GM10248 (cell line): ENCODE measurements at regions of chr11 and their contacts with region 1.

Region 1: GRCh38 chr11:68297812-68298658 is 14.4 kb upstream of the LRP5 start:
- DNase-seq: peak; percentile 89
- CTCF ChIP-seq: peak; percentile 93

Region 2: GRCh38 chr11:68191661-68192579 is 106.1 kb before region 1 on chr11:
- CTCF ChIA-PET with region 1: no interaction called
- POLR2A ChIA-PET with region 1: no interaction called
- DNase-seq: no peak
- CTCF ChIP-seq: no peak

Region 3: DNA sequence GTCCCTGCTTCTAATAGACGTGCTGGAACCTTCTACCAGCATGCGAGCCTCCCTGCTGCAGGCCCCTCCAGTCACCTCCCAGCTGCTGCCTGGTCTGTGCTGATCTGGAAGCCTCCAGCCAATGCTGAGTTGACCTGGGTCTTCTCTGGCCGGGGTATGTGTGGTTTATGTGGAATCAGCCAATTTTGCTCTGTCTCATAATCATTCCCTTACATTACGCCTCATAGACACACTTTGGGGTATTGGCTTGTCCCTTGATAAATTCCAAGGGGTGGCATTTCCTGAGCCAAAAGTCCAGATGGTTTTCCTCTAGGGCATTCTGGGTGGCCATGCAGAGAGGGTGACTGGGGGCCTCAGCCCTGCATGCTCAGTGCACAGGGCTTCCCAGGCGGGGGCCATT is 76.6 kb before region 1 on chr11:
- CTCF ChIA-PET with region 1: interaction called, 11 read pairs
- POLR2A ChIA-PET with region 1: no interaction called
- DNase-seq: no peak
- CTCF ChIP-seq: no peak

Region 4: GRCh38 chr11:68257475-68258362 is 40.3 kb before region 1 on chr11:
- CTCF ChIA-PET with region 1: interaction called, 197 read pairs
- POLR2A ChIA-PET with region 1: interaction called, 3 read pairs
- DNase-seq: peak; percentile 87
- CTCF ChIP-seq: peak; percentile 72

Region 5: GRCh38 chr11:68271781-68272608 is 26.0 kb before region 1 on chr11 and contains the start of gene C11orf24:
- CTCF ChIA-PET with region 1: interaction called, 67 read pairs
- POLR2A ChIA-PET with region 1: interaction called, 3 read pairs
- DNase-seq: peak; percentile 98
- CTCF ChIP-seq: no peak

Region 6: GRCh38 chr11:68287419-68287818 is 10.6 kb before region 1 on chr11:
- CTCF ChIA-PET with region 1: interaction called, 21 read pairs
- POLR2A ChIA-PET with region 1: no interaction called
- DNase-seq: no peak
- CTCF ChIP-seq: no peak